ENCODE measurements at regions of chr10 and their contacts with region 1.

Region 1: DNA sequence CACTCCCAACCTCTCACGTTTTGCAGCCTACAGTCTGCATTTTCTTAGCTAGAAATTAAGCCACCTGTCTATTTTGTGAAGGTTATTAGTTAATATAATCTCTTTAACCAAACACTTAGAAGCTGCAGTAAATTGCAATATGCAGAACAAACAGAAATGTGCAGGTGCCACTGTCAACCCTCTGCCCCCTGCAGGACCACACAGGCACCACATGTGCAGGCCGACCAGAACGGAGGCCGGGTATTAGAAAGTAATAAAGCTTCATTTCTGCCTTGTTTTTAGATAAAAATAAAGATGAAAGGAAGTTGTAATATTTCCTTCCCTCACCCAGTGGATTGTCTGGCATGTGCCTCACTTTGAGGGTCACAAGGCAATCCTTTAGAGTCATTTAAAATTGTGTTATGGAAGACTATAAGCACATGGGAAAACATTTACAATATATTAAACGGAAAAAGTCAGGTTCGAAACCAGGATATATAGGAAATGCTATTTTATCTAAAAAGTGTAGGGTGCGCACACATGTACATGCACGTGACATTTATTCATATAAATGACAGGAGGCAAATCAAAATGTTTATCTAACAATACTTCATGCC is 158.2 kb downstream of the ARHGAP12 start:
- DNase-seq: peak; percentile 75
- CTCF ChIP-seq: peak; percentile 74

Region 2: DNA sequence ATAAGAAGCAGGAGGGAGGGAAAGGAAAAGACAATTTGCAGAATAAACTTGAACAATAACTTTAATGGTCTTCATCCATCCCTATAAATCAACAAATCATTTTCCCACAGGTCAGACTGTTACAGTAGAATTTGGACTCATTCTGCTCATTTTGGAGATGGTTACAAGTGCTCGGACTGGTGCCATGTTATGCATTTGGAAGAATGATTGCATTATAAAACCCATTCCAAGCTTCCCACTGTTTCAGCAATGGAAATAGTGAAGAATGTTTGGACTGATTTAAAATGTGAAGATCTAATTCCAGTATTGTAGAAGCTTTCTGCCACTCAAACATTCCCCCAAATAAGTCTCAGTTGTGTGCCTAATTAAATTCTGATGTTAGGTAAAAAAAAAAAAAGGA is 551.1 kb before region 1 on chr10:
- CTCF ChIA-PET with region 1: no interaction called
- POLR2A ChIA-PET with region 1: no interaction called
- DNase-seq: no peak
- CTCF ChIP-seq: no peak

Region 3: GRCh38 chr10:31749981-31750731 is 20.2 kb before region 1 on chr10:
- CTCF ChIA-PET with region 1: interaction called, 11 read pairs
- POLR2A ChIA-PET with region 1: no interaction called
- DNase-seq: no peak
- CTCF ChIP-seq: no peak

Region 4: DNA sequence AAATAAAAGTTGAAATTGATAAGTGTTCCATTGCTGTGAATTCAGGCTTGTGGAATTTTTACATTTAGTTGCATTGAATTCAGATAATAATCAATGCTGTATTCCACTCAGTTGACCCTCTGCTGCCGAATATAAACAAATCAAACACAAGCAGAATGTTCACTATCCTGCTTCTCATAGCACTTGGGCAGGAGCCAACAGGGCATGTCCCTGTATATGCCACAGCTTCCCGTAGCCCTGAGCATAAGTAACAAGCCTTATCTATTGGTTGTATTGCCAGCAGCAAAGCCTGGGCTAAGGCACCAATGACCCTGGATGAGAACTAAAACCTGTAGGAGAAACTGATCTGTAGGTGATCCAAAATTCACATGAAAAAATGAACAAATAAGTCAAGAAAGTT is 12.3 kb after region 1 on chr10:
- CTCF ChIA-PET with region 1: interaction called, 32 read pairs
- POLR2A ChIA-PET with region 1: no interaction called
- DNase-seq: no peak
- CTCF ChIP-seq: no peak

Region 5: GRCh38 chr10:31822151-31822550 is 51.7 kb after region 1 on chr10:
- CTCF ChIA-PET with region 1: no interaction called
- POLR2A ChIA-PET with region 1: no interaction called
- DNase-seq: no peak
- CTCF ChIP-seq: no peak

Measured in GM10248 (cell line).